ENCODE measurements at regions of chr2 and their contacts with region 1.

Region 1: GRCh38 chr2:96923810-96924774 is 54.2 kb upstream of the SEMA4C start:
- DNase-seq: peak; percentile 78
- ATAC-seq: peak; percentile 82
- H3K4me3 Mint-ChIP-seq: peak overlapping the region; percentile 76
- H3K27ac Mint-ChIP-seq: peak overlapping the region; percentile 88
- H3K4me1 Mint-ChIP-seq: peaks cover 35% of the 10 kb centered on the region
- H3K27me3 Mint-ChIP-seq: no peaks in the 10 kb centered on the region
- CTCF ChIP-seq: no peak

Region 2: DNA sequence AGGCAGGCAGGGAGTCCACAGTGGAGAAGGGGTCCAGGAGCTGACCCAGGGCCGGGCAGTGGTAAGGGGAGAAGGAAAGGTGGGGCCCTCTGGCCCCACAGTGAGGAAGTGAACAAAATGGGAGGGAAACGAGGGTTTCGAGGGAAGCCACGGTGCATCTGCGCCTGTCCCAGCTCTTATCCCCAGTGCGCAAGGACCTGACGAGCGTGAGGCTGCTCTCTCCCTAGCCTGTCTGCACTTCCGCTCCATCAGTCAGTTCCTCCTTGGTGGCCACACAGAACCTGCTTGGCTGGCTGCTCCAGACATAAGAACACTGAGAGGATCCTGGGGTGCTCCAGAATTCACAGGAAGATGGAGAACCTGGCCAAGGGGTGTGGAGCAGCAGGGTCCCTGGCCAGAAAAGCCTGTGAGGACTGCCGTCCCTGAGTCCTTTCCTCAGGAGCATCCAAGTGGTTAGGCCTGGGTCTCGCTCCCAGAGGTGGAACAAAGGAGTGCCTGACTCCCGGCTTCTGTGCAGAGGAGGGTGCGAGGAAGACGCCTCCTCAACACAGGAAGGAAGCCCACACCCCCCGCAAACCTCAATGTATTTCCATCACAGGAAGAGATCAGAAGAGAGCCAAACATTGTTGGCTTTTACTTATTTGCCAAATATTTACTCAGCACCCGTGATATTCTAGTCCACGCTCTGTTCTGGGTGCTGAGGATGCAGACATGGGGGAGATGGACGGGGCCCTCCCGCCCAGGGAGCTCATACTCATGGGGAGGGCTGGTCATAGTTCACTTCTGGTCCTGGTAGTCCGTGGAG is 10.5 kb before region 1 on chr2:
- CTCF ChIA-PET with region 1: interaction called, 4 read pairs
- POLR2A ChIA-PET with region 1: interaction called, 12 read pairs
- intact Hi-C with region 1: no loop called
- DNase-seq: peak; percentile 74
- ATAC-seq: peak; percentile 93
- H3K4me3 Mint-ChIP-seq: peak overlapping the region; percentile 27
- H3K27ac Mint-ChIP-seq: peak overlapping the region; percentile 76
- H3K4me1 Mint-ChIP-seq: peaks cover 44% of the 10 kb centered on the region
- H3K27me3 Mint-ChIP-seq: no peaks in the 10 kb centered on the region
- CTCF ChIP-seq: no peak

Region 3: DNA sequence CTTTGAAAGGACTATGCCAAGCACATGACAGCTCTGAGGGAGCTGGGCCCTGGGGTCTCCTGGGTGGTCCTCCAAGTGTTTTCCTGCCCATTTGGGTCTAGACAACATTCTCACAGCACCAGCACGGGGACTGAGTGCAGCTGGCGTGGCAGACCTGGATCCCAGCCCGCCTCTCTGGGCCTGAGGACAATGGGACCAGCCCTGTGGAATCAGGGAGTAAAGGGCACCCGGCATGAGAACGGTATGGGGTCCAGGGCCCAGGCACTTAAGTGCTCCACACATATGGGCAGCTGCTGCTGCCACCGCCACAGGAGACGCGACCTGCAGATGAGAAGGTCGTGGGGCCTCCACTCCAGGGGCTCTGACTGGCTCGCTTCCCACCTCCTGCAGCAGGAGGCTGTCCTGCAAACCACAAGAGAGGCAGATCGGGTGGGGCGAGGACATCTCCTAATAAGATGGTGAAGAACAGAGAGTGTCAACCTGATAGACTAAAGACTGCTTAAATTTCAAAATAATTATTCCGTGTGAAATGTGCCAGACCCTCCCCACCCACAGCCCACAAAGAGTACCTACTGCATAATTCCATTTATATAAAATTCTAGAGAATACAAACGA is 16.0 kb after region 1 on chr2:
- CTCF ChIA-PET with region 1: interaction called, 4 read pairs
- POLR2A ChIA-PET with region 1: interaction called, 19 read pairs
- intact Hi-C with region 1: no loop called
- DNase-seq: no peak
- ATAC-seq: no peak
- H3K4me3 Mint-ChIP-seq: no peak overlapping the region
- H3K27ac Mint-ChIP-seq: no peak overlapping the region
- H3K4me1 Mint-ChIP-seq: peaks cover 22% of the 10 kb centered on the region
- H3K27me3 Mint-ChIP-seq: no peaks in the 10 kb centered on the region
- CTCF ChIP-seq: no peak